GM12878 (cell line): ENCODE measurements at regions of chr20 and their contacts with region 1.

Region 1: DNA sequence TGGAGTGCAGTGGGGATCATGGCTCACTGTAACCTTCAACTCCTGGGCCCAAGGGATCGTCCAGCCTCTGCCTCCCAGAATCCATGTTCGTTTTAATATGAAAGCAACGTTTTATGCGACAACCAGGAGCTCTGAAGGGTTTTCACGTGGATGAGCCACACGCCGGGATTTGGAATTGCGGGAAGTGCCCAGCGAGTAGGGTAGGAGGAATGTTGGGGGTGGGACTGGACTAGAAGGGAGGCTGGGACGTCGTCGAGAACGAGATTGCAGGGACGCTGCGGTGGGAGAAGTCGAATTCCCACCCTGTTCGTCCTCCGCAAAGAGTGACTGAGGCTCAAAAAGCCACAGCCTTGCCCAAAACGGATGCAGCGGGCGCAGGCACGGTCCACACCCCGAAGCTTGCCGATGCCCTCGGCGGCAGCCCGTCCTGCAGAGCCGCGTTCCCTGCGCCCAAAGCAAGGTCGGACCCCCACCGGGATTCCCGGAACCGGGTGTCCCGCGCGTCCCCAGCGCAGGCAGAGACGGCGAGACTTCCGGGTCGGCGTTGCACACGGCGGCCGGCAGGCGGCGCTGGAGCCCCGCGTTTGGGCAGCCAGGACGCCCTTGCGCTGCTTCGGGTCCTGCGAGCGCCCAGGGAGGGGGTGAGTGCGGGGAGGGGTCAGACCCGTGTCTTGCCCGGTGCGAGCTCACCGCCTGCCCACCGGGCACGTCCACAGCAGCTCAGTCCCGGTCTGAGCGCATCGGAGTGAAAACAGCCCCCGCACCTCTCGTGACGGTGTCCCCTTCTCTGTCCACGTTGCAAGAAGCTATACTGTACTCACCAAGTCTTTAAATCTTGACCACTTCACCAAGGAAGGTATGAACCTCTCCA is 87.8 kb downstream of the DHX35 start:
- DNase-seq: peak; percentile 21
- ATAC-seq: peak; percentile 93
- H3K4me3 ChIP-seq: peak overlapping the region; percentile 75
- H3K27ac ChIP-seq: 0 out of 2 replicates have a peak overlapping the region, but pooled peaks have one; percentile 33
- H3K4me1 ChIP-seq: peaks cover 4% of the 10 kb centered on the region; the same call in 1 of the 2 replicates
- H3K27me3 ChIP-seq: no peaks in the 10 kb centered on the region
- CTCF ChIP-seq: peak; percentile 99; a peak in 5 of 6 replicates
- EP300 ChIP-seq: no peak
- POLR2A ChIP-seq: peak; percentile 77
- RAD21 ChIP-seq: peak; percentile 86

Region 2: GRCh38 chr20:38645980-38646858 is 403.7 kb before region 1 on chr20:
- CTCF ChIA-PET with region 1: interaction called, 13 read pairs
- POLR2A ChIA-PET with region 1: no interaction called
- RAD21 ChIA-PET with region 1: interaction called, 7 read pairs
- SMC1A ChIA-PET with region 1: no interaction called
- in situ Hi-C with region 1: loop called (anchors 5 kb)
- intact Hi-C with region 1: loop called (anchors 1 kb)
- DNase-seq: peak; percentile 25
- ATAC-seq: peak; percentile 97
- H3K4me3 ChIP-seq: no peak overlapping the region; the same call in 1 of the 2 replicates
- H3K27ac ChIP-seq: no peak overlapping the region
- H3K4me1 ChIP-seq: no peaks in the 10 kb centered on the region; the same call in none of the 2 replicates
- H3K27me3 ChIP-seq: peaks cover 0 to 3% of the 10 kb centered on the region in 2 experiments; a peak in 2 of 4 replicates
- CTCF ChIP-seq: peak; percentile 89 to 97 (median 96)
- EP300 ChIP-seq: no peak
- POLR2A ChIP-seq: no peak
- RAD21 ChIP-seq: peak; percentile 94

Region 3: DNA sequence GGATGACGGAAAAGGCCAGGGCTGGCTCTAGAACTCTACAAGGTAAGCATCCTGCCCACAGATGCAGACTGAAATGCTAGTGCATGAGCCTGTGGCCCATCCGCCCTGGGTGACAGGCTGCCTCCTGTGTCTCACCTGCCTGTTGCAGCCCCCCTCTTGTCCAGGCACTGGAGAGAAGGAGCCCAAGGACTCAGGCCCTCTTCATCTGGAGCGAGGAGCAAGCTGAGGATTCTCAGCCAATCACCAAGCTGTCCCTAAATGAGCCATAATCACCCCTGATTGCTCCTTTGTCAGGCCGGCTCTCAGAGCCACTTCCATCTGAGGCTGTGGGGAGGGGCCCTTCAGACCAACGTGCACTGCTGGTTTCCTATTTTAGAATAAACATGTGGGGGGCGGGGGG is 335.6 kb before region 1 on chr20:
- CTCF ChIA-PET with region 1: no interaction called
- POLR2A ChIA-PET with region 1: no interaction called
- RAD21 ChIA-PET with region 1: no interaction called
- SMC1A ChIA-PET with region 1: no interaction called
- in situ Hi-C with region 1: no loop called
- intact Hi-C with region 1: no loop called
- DNase-seq: no peak
- ATAC-seq: no peak
- H3K4me3 ChIP-seq: no peak overlapping the region
- H3K27ac ChIP-seq: no peak overlapping the region
- H3K4me1 ChIP-seq: no peaks in the 10 kb centered on the region
- H3K27me3 ChIP-seq: peaks cover 1 to 3% of the 10 kb centered on the region in 2 experiments; a peak in 3 of 4 replicates
- CTCF ChIP-seq: no peak
- EP300 ChIP-seq: no peak
- POLR2A ChIP-seq: no peak
- RAD21 ChIP-seq: no peak

Region 4: GRCh38 chr20:38926142-38926933 is 123.6 kb before region 1 on chr20 and contains the start of gene FAM83D:
- CTCF ChIA-PET with region 1: interaction called, 182 read pairs
- POLR2A ChIA-PET with region 1: interaction called, 7 read pairs
- RAD21 ChIA-PET with region 1: interaction called, 91 read pairs
- SMC1A ChIA-PET with region 1: interaction called, 54 read pairs
- in situ Hi-C with region 1: loop called (anchors 5 kb)
- intact Hi-C with region 1: loop called (anchors 1 kb)
- DNase-seq: peak; percentile 92
- ATAC-seq: peak; percentile 96
- H3K4me3 ChIP-seq: peak within 1 kb of the TSS; percentile 78
- H3K27ac ChIP-seq: peak within 1 kb of the TSS; percentile 78
- H3K4me1 ChIP-seq: peaks cover 12% of the 10 kb centered on the region
- H3K27me3 ChIP-seq: no peaks in the 10 kb centered on the region
- CTCF ChIP-seq: no peak; a peak in 2 of 6 replicates
- EP300 ChIP-seq: no peak
- POLR2A ChIP-seq: peak; percentile 99
- RAD21 ChIP-seq: no peak; the same call in 1 of the 2 replicates
- polyA plus RNA-seq, gene FAM83D: 4.5 to 6.0 TPM

Region 5: GRCh38 chr20:38985603-38986170 is 64.2 kb before region 1 on chr20:
- CTCF ChIA-PET with region 1: interaction called, 32 read pairs
- POLR2A ChIA-PET with region 1: no interaction called
- RAD21 ChIA-PET with region 1: interaction called, 3 read pairs
- SMC1A ChIA-PET with region 1: interaction called, 5 read pairs
- in situ Hi-C with region 1: no loop called
- intact Hi-C with region 1: no loop called
- DNase-seq: peak; percentile 20
- ATAC-seq: peak; percentile 58
- H3K4me3 ChIP-seq: no peak overlapping the region
- H3K27ac ChIP-seq: peak overlapping the region; percentile 17
- H3K4me1 ChIP-seq: peaks cover 34% of the 10 kb centered on the region
- H3K27me3 ChIP-seq: no peaks in the 10 kb centered on the region
- CTCF ChIP-seq: no peak
- EP300 ChIP-seq: no peak
- POLR2A ChIP-seq: no peak
- RAD21 ChIP-seq: no peak

Region 6: DNA sequence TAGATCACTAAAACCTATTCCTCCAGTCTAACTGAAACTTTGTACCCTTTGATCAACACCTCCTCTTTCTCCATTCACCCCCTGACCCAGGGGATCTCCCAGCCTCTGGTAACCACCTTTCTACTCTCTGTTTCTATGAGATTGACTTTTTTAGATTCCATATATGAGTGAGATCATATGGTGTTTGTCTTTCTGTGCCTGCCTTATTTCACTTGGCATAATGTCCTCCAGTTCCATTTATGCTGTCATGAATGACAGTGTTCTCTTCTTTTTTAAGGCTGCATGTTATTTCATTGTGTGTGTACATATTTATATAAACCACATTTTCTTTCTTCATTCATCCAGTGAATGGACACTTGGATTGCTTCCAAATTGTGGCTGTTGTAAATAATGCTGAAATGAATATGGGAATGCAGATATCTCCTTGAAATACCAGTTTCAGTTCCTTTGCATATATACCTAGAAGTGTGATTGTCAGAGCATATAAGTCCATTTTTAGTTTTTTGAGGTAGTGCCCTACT is 30.1 kb before region 1 on chr20:
- CTCF ChIA-PET with region 1: interaction called, 40 read pairs
- POLR2A ChIA-PET with region 1: no interaction called
- RAD21 ChIA-PET with region 1: interaction called, 5 read pairs
- SMC1A ChIA-PET with region 1: interaction called, 22 read pairs
- in situ Hi-C with region 1: no loop called
- intact Hi-C with region 1: loop called (anchors 1 kb)
- DNase-seq: peak; percentile 79
- ATAC-seq: peak; percentile 92
- H3K4me3 ChIP-seq: peak overlapping the region; percentile 29; the same call in 1 of the 2 replicates
- H3K27ac ChIP-seq: peak overlapping the region; percentile 53
- H3K4me1 ChIP-seq: peaks cover 41% of the 10 kb centered on the region
- H3K27me3 ChIP-seq: no peaks in the 10 kb centered on the region
- CTCF ChIP-seq: no peak
- EP300 ChIP-seq: peak; percentile 44 to 65; a peak in 2 of 4 replicates
- POLR2A ChIP-seq: no peak
- RAD21 ChIP-seq: no peak

Region 7: DNA sequence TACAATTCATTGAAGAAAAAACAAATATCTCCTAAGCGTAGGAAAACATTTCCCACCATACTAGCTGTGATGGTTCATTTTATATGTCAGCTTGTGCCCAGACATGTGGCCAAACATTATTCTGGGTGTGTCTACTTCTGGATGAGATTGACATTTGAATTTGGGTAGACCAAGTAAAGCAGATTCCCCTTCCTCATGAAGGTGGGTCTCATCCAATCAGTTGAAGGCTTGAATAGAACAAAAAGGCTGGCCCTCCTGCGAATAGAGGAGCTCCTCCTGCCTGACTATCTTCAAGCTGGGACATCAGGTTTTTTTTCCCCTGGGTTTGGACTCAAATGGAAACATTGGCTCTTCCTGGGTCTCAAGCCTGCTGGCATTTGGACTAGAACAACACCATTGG is 25.8 kb after region 1 on chr20:
- CTCF ChIA-PET with region 1: interaction called, 152 read pairs
- POLR2A ChIA-PET with region 1: interaction called, 3 read pairs
- RAD21 ChIA-PET with region 1: interaction called, 28 read pairs
- SMC1A ChIA-PET with region 1: interaction called, 61 read pairs
- in situ Hi-C with region 1: no loop called
- intact Hi-C with region 1: no loop called
- DNase-seq: no peak
- ATAC-seq: no peak
- H3K4me3 ChIP-seq: no peak overlapping the region
- H3K27ac ChIP-seq: no peak overlapping the region
- H3K4me1 ChIP-seq: no peaks in the 10 kb centered on the region
- H3K27me3 ChIP-seq: peaks cover 0 to 3% of the 10 kb centered on the region in 2 experiments; a peak in 3 of 4 replicates
- CTCF ChIP-seq: no peak
- EP300 ChIP-seq: no peak
- POLR2A ChIP-seq: no peak
- RAD21 ChIP-seq: no peak

Region 8: DNA sequence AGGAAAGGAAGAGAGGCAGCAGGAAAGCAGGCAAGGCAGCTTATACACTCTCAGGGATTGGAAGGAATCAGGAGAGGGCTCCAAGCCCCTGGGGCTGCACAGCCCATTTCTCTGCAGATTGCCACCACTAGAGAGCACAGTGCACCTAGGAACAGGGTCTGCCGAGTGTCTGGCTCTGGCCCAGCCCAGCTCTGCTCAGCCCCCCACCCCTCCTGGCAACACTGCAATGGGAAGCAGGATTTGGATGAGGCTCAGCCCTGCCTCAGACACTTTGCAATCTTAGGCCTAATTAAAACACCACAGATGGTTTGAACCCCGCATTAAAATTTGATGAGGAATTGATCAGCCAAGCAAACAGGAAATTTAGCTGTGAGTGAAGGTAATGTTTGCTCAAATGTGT is 164.9 kb after region 1 on chr20:
- CTCF ChIA-PET with region 1: no interaction called
- POLR2A ChIA-PET with region 1: no interaction called
- RAD21 ChIA-PET with region 1: no interaction called
- SMC1A ChIA-PET with region 1: no interaction called
- in situ Hi-C with region 1: no loop called
- intact Hi-C with region 1: no loop called
- DNase-seq: no peak
- ATAC-seq: no peak
- H3K4me3 ChIP-seq: no peak overlapping the region
- H3K27ac ChIP-seq: no peak overlapping the region
- H3K4me1 ChIP-seq: no peaks in the 10 kb centered on the region
- H3K27me3 ChIP-seq: peaks cover 0 to 3% of the 10 kb centered on the region in 2 experiments; a peak in 2 of 4 replicates
- CTCF ChIP-seq: no peak
- EP300 ChIP-seq: no peak
- POLR2A ChIP-seq: no peak
- RAD21 ChIP-seq: no peak